Activated T-helper 2 cell treated with anti-CD3 and anti-CD28 coated beads, Interferon-gamma antibody, Interleukin-2, Interleukin-4, amounts not matched to agents 10 μg/mL and 5 μg/mL and 100 μg/mL, durations not matched to agents 14 hours and 24 hours and 36 hours (primary cell): ENCODE measurements at regions of chr3 and their contacts with region 1.

Region 1: GRCh38 chr3:151468284-151468917 is 7.5 kb upstream of the IGSF10 start:
- DNase-seq: no peak
- H3K4me3 Mint-ChIP-seq: no peak overlapping the region
- H3K27ac Mint-ChIP-seq: no peak overlapping the region
- H3K4me1 Mint-ChIP-seq: no peaks in the 10 kb centered on the region
- H3K27me3 Mint-ChIP-seq: peaks cover 7% of the 10 kb centered on the region

Region 2: GRCh38 chr3:151445273-151446001 is 23.0 kb before region 1 on chr3:
- intact Hi-C with region 1: no loop called
- DNase-seq: no peak
- H3K4me3 Mint-ChIP-seq: no peak overlapping the region
- H3K27ac Mint-ChIP-seq: no peak overlapping the region
- H3K4me1 Mint-ChIP-seq: no peaks in the 10 kb centered on the region
- H3K27me3 Mint-ChIP-seq: peaks cover 3% of the 10 kb centered on the region

Region 3: DNA sequence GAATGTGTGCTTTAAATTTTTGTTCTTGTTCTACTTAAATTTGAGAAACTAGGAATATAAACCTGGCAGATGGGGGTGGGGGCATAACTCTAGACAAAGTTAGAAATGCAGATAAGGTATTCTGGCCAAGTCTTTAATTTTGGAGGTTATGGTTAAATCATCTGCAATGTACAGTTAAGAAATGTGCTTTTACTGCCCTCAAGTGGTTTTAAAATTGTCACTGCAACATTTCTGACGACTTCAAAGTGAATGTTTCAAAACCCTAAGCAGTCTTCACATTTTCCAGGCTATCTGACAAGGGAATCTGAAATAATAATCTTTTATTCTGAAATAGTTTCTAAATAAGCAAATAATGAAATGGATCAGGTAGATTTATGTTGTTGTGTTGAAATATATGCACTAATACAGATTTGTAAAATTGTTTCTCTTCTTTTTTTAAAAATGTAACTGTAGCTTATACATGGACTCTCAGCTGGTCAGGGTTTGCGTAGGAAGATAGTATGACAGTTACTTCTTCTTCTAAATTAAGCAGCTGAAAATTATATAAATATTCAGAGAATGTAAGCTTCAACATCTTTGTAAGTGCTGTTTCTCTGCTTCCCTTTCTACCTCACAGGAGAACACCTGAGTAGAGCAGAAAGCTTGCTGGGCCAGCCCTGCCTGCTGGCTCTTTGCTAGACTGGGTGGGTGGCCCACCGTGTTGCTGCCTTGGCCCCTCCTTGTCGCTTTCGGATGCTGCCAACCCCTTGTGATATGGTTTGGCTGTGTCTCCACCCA is 450.0 kb after region 1 on chr3:
- intact Hi-C with region 1: loop called (anchors 2 kb)
- DNase-seq: no peak
- H3K4me3 Mint-ChIP-seq: no peak overlapping the region
- H3K27ac Mint-ChIP-seq: no peak overlapping the region
- H3K4me1 Mint-ChIP-seq: peaks cover 2% of the 10 kb centered on the region
- H3K27me3 Mint-ChIP-seq: peaks cover 17% of the 10 kb centered on the region